Activated CD4-positive, alpha-beta memory T cell treated with anti-CD3 and anti-CD28 coated beads for 36 hours (primary cell): ENCODE measurements at regions of chr17 and their contacts with region 1.

Region 1: DNA sequence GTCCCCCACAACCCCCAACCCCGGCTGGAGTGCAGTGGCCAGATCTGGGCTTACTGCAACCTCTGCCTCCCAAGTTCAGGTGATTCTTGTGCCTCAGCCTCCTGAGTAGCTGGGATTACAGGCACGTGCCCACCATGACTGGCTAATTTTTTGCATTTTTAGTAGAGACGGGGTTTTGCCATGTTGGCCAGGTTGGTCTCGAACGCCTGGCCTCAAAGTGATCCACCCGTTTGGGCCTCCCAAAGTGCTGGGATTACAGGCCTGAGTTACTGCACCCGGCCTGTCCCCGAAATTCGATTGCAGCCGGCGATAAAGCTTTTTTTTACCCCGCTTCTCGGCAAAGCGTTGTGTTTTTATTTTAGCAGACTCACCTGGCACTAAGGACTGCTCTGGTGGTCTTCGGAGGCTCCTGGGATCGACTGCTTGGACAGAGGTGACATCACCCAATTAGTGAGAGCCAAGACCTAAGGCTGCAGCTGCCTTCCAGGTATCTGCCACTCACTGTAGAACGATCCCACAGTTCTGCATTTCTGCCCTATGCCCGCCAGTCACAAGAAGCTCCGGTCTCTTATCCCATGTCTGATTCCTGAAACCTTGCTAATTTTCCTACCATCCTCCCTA is 82.2 kb upstream of the ARL4D start:
- DNase-seq: peak; percentile 37
- H3K4me3 Mint-ChIP-seq: no peak overlapping the region
- H3K27ac Mint-ChIP-seq: peak overlapping the region; percentile 51
- H3K4me1 Mint-ChIP-seq: peaks cover 14% of the 10 kb centered on the region
- H3K27me3 Mint-ChIP-seq: no peaks in the 10 kb centered on the region

Region 2: GRCh38 chr17:42183741-42184711 is 1132.6 kb before region 1 on chr17:
- CTCF ChIA-PET with region 1: no interaction called
- POLR2A ChIA-PET with region 1: no interaction called
- intact Hi-C with region 1: no loop called
- DNase-seq: peak; percentile 88
- H3K4me3 Mint-ChIP-seq: peak overlapping the region; percentile 80
- H3K27ac Mint-ChIP-seq: peak overlapping the region; percentile 76
- H3K4me1 Mint-ChIP-seq: peaks cover 49% of the 10 kb centered on the region
- H3K27me3 Mint-ChIP-seq: no peaks in the 10 kb centered on the region

Region 3: GRCh38 chr17:42997984-42998938 is 318.4 kb before region 1 on chr17 and contains the start of gene RPL27:
- CTCF ChIA-PET with region 1: no interaction called
- POLR2A ChIA-PET with region 1: interaction called, 10 read pairs
- intact Hi-C with region 1: no loop called
- DNase-seq: peak; percentile 99
- H3K4me3 Mint-ChIP-seq: peak within 1 kb of the TSS; percentile 98
- H3K27ac Mint-ChIP-seq: peak within 1 kb of the TSS; percentile 98
- H3K4me1 Mint-ChIP-seq: peaks cover 30% of the 10 kb centered on the region
- H3K27me3 Mint-ChIP-seq: no peaks in the 10 kb centered on the region
- total RNA-seq, gene RPL27: 1,552 to 1,589 TPM

Region 4: GRCh38 chr17:43024407-43025289 is 292.0 kb before region 1 on chr17 and contains the start of gene RND2:
- CTCF ChIA-PET with region 1: interaction called, 5 read pairs
- POLR2A ChIA-PET with region 1: interaction called, 11 read pairs
- intact Hi-C with region 1: no loop called
- DNase-seq: peak; percentile 88
- H3K4me3 Mint-ChIP-seq: peak within 1 kb of the TSS; percentile 74
- H3K27ac Mint-ChIP-seq: peak within 1 kb of the TSS; percentile 21
- H3K4me1 Mint-ChIP-seq: peaks cover 21% of the 10 kb centered on the region
- H3K27me3 Mint-ChIP-seq: no peaks in the 10 kb centered on the region
- total RNA-seq, gene RND2: 0.07 TPM in 1 of 2 experiments, not detected in the other

Region 5: GRCh38 chr17:43170766-43171585 is 145.7 kb before region 1 on chr17 and contains the start of gene NBR1:
- CTCF ChIA-PET with region 1: interaction called, 3 read pairs
- POLR2A ChIA-PET with region 1: interaction called, 39 read pairs
- intact Hi-C with region 1: loop called (anchors 1 kb)
- DNase-seq: peak; percentile 99
- H3K4me3 Mint-ChIP-seq: no peak within 1 kb of the TSS
- H3K27ac Mint-ChIP-seq: no peak within 1 kb of the TSS
- H3K4me1 Mint-ChIP-seq: peaks cover 25% of the 10 kb centered on the region
- H3K27me3 Mint-ChIP-seq: no peaks in the 10 kb centered on the region
- total RNA-seq, gene NBR1: 62.0 to 65.9 TPM

Region 6: DNA sequence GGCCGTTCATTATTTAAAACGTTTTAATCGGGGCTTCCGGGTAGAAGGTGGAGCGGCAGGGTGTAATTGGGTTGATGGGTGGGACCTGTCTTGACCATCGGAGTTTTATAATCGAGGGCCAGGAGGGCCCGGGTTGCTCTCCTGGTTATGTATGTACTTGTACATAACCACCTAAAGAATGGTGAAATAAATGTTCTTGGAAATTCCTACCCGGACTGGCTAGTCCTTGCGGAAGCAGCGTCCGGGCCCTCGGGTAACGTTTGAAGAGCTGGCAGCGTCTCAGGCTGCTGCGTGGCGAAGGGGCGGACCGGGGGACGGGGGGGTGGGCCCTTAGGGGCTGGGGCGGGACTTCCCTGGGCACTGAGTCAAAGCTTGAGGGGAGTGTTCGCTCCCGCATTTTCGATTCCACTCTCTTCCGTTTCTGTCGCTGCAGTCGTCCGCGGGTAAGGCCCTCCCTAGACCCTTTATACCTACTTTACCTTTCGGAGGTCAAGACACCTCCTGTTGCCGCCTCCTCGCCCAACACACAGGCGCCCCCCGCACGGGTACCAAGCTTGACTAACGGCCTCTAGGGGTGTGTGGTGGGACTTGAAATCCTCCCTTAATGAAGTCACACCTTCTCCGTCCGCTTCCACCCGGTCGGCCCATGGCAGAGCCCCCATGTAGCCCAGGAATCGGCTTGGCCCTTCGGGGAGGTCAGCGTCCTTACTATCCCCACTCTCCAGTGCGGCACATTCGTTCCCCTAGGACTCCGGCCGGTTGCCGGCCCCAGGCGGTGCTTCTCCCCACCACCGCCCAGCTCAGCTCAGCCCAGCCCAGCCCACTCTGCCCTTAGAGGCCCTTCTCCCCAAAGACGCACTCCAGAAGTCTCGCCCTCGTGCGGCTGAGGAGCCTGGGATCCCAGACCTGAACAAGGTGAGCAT is 104.9 kb before region 1 on chr17 and contains the start of gene TMEM106A:
- CTCF ChIA-PET with region 1: interaction called, 5 read pairs
- POLR2A ChIA-PET with region 1: interaction called, 64 read pairs
- intact Hi-C with region 1: loop called (anchors 1 kb)
- DNase-seq: peak; percentile 85
- H3K4me3 Mint-ChIP-seq: peak within 1 kb of the TSS; percentile 88
- H3K27ac Mint-ChIP-seq: peak within 1 kb of the TSS; percentile 82
- H3K4me1 Mint-ChIP-seq: peaks cover 27% of the 10 kb centered on the region
- H3K27me3 Mint-ChIP-seq: no peaks in the 10 kb centered on the region
- total RNA-seq, gene TMEM106A: 10.1 to 10.4 TPM

Region 7: DNA sequence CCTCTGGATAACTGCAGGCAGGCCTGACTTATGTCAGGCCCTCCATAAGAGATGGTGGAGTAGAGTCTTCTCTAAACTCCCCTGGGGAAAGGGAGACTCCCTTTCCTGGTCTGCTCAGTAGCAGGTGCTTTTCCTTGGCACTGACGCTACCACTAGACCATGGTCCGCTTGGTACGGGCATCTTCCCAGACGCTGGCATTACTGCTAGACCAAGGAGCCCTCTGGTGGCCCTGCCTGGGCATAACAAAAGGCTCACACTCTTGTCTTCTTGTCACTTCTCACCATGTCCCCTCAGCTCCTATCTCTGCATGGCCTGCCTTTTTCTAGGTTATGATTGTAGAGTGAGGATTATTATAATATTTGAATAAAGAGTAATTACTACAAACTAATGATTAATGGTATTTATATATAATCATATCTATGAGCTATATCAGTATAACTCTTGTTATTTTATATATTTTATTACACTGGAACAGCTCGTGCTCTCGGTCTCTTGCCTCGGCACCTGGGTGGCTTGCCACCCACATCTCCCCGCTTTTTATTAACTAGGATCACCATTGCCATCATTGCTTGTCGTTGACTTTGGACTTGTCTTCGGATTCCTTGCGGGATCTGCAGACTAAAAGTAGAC is 22.4 kb after region 1 on chr17:
- CTCF ChIA-PET with region 1: interaction called, 3 read pairs
- POLR2A ChIA-PET with region 1: interaction called, 12 read pairs
- intact Hi-C with region 1: no loop called
- DNase-seq: peak; percentile 74
- H3K4me3 Mint-ChIP-seq: no peak overlapping the region
- H3K27ac Mint-ChIP-seq: no peak overlapping the region
- H3K4me1 Mint-ChIP-seq: peaks cover 30% of the 10 kb centered on the region
- H3K27me3 Mint-ChIP-seq: no peaks in the 10 kb centered on the region

Region 8: GRCh38 chr17:43367737-43368242 is 51.2 kb after region 1 on chr17:
- CTCF ChIA-PET with region 1: no interaction called
- POLR2A ChIA-PET with region 1: interaction called, 97 read pairs
- intact Hi-C with region 1: no loop called
- DNase-seq: peak; percentile 49
- H3K4me3 Mint-ChIP-seq: peak overlapping the region; percentile 94
- H3K27ac Mint-ChIP-seq: peak overlapping the region; percentile 100
- H3K4me1 Mint-ChIP-seq: peaks cover 36% of the 10 kb centered on the region
- H3K27me3 Mint-ChIP-seq: no peaks in the 10 kb centered on the region

Region 9: GRCh38 chr17:43467981-43468581 is 151.4 kb after region 1 on chr17:
- CTCF ChIA-PET with region 1: no interaction called
- POLR2A ChIA-PET with region 1: no interaction called
- intact Hi-C with region 1: no loop called
- DNase-seq: peak; percentile 14
- H3K4me3 Mint-ChIP-seq: no peak overlapping the region
- H3K27ac Mint-ChIP-seq: no peak overlapping the region
- H3K4me1 Mint-ChIP-seq: no peaks in the 10 kb centered on the region
- H3K27me3 Mint-ChIP-seq: peaks cover 14% of the 10 kb centered on the region